Pancreas (tissue), 10 donors: ENCODE measurements at regions of chr2 and their contacts with region 1.

Region 1: DNA sequence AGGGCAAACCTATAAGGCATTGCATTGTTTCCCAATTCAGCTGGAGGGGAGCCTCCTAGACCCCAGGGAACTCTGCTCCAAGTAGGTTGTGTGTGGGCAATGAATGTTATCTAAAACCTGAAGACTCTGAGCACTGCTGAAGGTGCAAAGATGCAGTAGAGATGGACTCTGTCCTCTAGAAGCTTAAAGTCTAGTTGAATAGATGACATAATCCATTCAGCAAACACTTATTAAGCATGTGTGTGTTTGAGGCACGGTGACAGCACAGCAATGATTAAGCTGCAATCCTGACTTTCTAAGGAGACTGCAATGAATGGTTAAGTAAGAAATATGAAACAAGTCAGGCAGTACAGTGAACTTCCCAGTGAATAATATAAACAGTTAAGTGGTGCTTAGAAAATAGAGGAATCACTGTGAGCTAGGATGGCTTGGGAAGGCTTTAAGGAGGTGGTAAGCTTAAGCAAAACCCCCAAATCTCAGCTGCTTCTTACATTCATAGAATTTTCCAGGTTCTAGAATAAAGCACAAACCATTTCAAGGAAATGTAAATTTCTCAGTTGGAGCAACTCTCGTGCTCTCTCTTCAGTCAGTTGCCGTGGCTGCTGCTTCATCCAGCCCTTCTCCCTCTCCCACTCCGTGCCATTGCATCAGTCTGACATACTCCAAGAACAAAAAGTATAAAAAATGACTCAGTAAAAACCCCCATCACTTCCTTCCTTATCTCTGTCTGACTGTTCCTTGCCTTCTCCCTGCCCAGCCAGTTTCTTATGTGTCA is 19.1 kb downstream of the MXD1 start:
- DNase-seq: no peak
- ATAC-seq: peak in 3 of 4 donors; percentile 61 to 80 (median 78)
- H3K4me3 ChIP-seq: no peak overlapping the region
- H3K27ac ChIP-seq: peak overlapping the region in 1 of 4 donors; percentile 11
- H3K4me1 ChIP-seq: peaks cover 0 to 9% (median 0%) of the 10 kb centered on the region in 3 donors
- H3K27me3 ChIP-seq: no peaks in the 10 kb centered on the region
- CTCF ChIP-seq: no peak

Region 2: GRCh38 chr2:69807821-69808540 is 126.0 kb before region 1 on chr2:
- intact Hi-C with region 1: no loop called
- DNase-seq: no peak
- ATAC-seq: no peak
- H3K4me3 ChIP-seq: no peak overlapping the region
- H3K27ac ChIP-seq: no peak overlapping the region
- H3K4me1 ChIP-seq: no peaks in the 10 kb centered on the region
- H3K27me3 ChIP-seq: no peaks in the 10 kb centered on the region
- CTCF ChIP-seq: no peak

Region 3: DNA sequence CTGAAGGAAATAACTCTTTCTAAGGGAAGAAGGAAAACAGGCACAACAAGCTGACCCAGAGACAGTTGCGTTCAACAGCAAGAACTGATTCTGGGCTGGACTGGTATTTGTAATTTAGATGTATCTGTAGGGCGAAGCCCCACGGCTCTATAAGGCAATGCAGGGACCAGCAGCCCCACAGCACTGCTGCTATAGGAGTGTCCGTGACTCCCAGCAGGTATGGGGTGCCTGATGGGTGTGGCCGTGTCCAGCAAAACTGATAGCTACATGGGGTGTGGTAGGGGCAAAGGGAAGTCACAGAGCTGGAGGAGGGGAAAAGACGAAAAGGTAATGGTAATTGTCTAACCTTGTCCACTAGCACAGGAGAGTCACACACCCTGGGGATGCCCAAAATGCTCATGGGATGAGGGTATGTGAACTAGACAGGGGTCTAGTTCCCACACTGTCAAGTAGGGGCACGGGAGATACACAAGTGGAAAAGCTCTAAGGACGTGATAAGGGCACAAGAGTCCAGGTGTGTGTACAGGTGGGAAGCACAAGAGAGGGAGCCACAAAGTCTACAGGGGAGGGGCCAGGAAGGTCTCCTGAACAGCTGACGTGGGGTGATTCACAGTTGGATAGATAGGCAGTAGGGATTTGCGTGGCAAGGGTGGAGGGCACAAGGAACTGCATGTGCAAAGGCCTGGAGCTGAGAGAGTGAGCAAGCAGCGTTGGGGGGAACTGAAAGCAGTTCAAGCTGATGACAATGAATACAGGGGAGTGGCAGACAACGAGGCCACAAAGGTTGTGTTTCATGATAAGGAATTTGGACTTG is 75.9 kb after region 1 on chr2:
- intact Hi-C with region 1: no loop called
- DNase-seq: no peak
- ATAC-seq: peak in 3 of 4 donors; percentile 66 to 73 (median 67)
- H3K4me3 ChIP-seq: no peak overlapping the region
- H3K27ac ChIP-seq: no peak overlapping the region
- H3K4me1 ChIP-seq: no peaks in the 10 kb centered on the region
- H3K27me3 ChIP-seq: no peaks in the 10 kb centered on the region
- CTCF ChIP-seq: no peak

Region 4: DNA sequence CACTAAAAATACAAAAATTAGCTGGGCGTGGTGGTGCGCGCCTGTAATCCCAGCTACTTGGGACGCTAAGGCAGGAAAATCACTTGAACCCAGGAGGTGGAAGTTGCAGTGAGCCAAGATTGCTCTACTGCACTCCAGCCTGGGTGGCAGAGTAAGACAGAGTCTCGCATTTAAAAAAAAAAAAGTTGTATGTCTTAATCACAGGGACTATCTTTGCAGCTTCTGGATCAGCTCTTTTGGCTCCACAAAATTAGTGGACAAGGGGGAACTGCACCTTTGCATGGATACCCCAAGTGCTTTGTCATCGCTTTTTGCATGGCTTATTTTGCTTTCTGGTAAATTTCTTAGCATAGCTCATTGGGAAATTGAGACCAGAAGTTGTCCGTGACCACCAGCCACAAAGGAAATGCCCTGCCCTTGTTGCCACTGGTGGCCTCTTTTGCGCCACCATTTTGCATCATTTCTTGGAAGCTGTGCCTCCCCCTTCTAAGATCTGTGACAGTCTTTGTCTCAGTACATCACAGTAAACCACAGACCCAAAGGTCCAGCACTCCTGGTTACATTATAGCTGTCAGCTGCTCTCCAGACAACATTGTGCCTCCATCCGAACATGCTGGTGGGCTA is 109.3 kb after region 1 on chr2:
- intact Hi-C with region 1: loop called in 1 of 3 experiments (anchors 10 kb)
- DNase-seq: peak in 1 of 6 donors; percentile 36
- ATAC-seq: peak in 2 of 4 donors; percentile 34 to 69
- H3K4me3 ChIP-seq: no peak overlapping the region
- H3K27ac ChIP-seq: peak overlapping the region in 1 of 4 donors; percentile 19
- H3K4me1 ChIP-seq: no peaks in the 10 kb centered on the region
- H3K27me3 ChIP-seq: no peaks in the 10 kb centered on the region
- CTCF ChIP-seq: no peak